Psoas muscle (tissue), 8 donors: ENCODE measurements at regions of chr11 and their contacts with region 1.

Region 1: DNA sequence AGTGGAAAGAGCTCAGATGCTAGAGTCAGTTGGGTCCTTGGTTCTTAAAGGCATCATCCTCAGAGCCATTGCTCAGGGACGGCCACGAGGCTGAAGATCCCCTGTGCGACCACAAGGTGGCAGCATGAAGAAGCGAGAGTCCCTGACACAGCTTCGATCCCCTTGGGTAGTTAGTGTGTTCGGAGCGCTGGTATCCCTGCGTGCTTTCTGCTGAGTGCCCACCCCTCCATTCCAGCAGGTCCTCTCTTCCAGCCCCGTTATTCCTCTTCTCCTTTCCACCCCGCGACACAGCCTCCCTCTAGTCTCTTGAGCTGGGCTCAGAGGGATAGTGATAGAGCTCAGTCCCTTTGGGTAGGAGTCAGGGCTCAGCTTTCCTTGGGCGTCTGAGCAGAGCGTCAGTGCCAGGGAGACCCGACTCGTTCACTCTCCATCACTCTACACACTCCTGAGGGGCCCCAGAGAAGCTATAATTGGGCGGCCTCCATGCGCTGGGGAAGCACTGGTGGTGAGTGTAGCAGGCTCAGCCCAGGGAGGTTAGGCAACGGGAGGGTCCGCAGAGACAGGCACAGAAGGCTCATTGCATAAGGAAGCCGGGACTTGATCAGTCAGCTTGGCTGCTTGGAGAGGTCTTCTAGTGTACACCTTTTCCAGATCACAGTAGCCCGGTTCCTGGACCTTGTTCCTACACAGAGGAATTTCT is at the start of gene OR51D1:
- DNase-seq: peak; percentile 54 to 78
- ATAC-seq: peak; percentile 83 to 97 (median 88)
- H3K4me3 ChIP-seq: peak within 1 kb of the TSS; percentile 52
- H3K27ac ChIP-seq: no peak within 1 kb of the TSS
- H3K4me1 ChIP-seq: no peaks in the 10 kb centered on the region
- H3K27me3 ChIP-seq: peaks cover 0 to 4% (median 0%) of the 10 kb centered on the region in 3 donors
- CTCF ChIP-seq: peak; percentile 95
- total RNA-seq, gene OR51D1: not detected

Region 2: DNA sequence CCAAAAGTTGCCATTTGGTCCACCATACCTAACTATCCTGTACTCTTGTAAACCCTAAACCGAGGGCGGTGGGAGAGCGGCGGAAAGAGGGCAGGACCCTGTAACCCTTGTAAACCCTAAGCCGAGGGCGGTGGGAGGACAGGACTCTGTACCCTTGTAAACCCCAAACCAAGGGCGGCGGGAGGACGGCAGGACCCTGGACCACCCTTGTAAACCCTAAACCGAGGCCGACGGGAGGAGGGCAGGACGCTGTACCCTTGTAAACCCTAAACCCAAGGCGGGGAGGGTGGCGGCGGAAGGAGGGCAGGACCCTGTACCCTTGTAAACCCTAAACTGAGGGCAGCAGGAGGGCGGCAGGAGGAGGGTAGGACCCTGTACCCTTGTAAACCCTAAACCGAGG is 68.0 kb before region 1 on chr11:
- intact Hi-C with region 1: no loop called
- DNase-seq: no peak
- ATAC-seq: no peak
- H3K4me3 ChIP-seq: no peak overlapping the region
- H3K27ac ChIP-seq: no peak overlapping the region
- H3K4me1 ChIP-seq: no peaks in the 10 kb centered on the region
- H3K27me3 ChIP-seq: peaks cover 0 to 3% (median 1%) of the 10 kb centered on the region in 3 donors
- CTCF ChIP-seq: no peak

Region 3: GRCh38 chr11:4826425-4826824 is 189.3 kb after region 1 on chr11:
- intact Hi-C with region 1: loop called (anchors 1 to 5 kb)
- DNase-seq: no peak
- ATAC-seq: no peak
- H3K4me3 ChIP-seq: no peak overlapping the region
- H3K27ac ChIP-seq: no peak overlapping the region
- H3K4me1 ChIP-seq: no peaks in the 10 kb centered on the region
- H3K27me3 ChIP-seq: no peaks in the 10 kb centered on the region
- CTCF ChIP-seq: peak; percentile 44

Region 4: DNA sequence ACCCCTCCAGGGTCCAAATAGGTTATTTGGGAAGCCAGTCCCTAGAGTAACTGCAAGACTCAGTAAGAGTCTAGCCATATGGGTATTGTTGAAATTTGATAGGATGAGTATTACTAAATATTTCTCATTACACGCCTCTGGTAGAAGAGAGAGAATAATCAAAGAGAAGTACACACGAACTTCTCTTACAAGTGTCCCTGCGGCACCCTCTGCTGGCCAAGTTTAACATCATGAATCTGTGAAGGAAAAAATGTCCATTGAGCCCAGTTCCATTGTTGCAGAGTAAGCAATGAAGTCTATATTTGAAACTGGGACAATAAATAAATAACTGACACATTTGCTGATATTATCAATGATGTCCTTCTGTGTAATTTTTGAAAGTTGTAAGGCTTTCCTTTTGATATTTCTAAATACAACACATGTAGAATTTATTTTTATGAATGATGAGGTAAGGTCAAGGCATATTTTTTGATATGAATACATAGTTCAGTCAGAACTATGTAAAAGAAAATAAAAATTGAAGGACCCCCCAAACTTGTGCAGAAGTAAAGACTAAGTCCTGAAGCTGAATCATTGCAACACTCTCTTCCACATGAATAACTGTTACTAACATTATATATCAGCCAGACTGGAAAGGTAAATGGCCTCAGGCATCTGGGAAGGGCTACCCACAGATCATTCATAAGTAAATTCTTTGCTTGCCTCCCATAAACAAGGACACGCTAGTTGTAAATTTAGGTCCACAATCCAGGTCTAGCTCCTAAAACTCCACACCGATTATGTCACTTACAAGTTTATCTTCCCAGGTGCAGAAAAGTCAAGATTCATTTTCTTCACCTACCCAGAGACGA is 367.5 kb after region 1 on chr11:
- intact Hi-C with region 1: loop called (anchors 5 kb)
- DNase-seq: no peak
- ATAC-seq: no peak
- H3K4me3 ChIP-seq: no peak overlapping the region
- H3K27ac ChIP-seq: no peak overlapping the region
- H3K4me1 ChIP-seq: no peaks in the 10 kb centered on the region
- H3K27me3 ChIP-seq: peaks cover 0 to 4% (median 2%) of the 10 kb centered on the region in 3 donors
- CTCF ChIP-seq: peak; percentile 58

Region 5: GRCh38 chr11:6402561-6402981 is 1765.5 kb after region 1 on chr11:
- intact Hi-C with region 1: no loop called
- DNase-seq: no peak
- ATAC-seq: no peak
- H3K4me3 ChIP-seq: no peak overlapping the region
- H3K27ac ChIP-seq: no peak overlapping the region
- H3K4me1 ChIP-seq: no peaks in the 10 kb centered on the region
- H3K27me3 ChIP-seq: no peaks in the 10 kb centered on the region
- CTCF ChIP-seq: no peak